Sigmoid colon (tissue), 7 donors: ENCODE measurements at regions of chr6 and their contacts with region 1.

Region 1: GRCh38 chr6:3724451-3725108 is 26.9 kb downstream of the PXDC1 start:
- DNase-seq: no peak
- H3K4me3 ChIP-seq: no peak overlapping the region
- H3K27ac ChIP-seq: peak overlapping the region in 1 of 4 donors; percentile 1
- H3K4me1 ChIP-seq: peaks cover 0 to 49% (median 35%) of the 10 kb centered on the region in 4 donors
- H3K27me3 ChIP-seq: no peaks in the 10 kb centered on the region
- CTCF ChIP-seq: no peak
- EP300 ChIP-seq: no peak
- POLR2A ChIP-seq: no peak

Region 2: GRCh38 chr6:3566812-3567211 is 157.8 kb before region 1 on chr6:
- intact Hi-C with region 1: loop called (anchors 5 kb)
- DNase-seq: no peak
- H3K4me3 ChIP-seq: no peak overlapping the region
- H3K27ac ChIP-seq: no peak overlapping the region
- H3K4me1 ChIP-seq: peaks cover 0 to 29% (median 14%) of the 10 kb centered on the region in 4 donors
- H3K27me3 ChIP-seq: no peaks in the 10 kb centered on the region
- CTCF ChIP-seq: no peak
- EP300 ChIP-seq: no peak
- POLR2A ChIP-seq: no peak